ENCODE measurements at regions of chr9 and their contacts with region 1.

Region 1: GRCh38 chr9:14018081-14018480 is 295.9 kb downstream of the NFIB start:
- DNase-seq: no peak

Region 2: GRCh38 chr9:13975611-13976290 is 42.3 kb before region 1 on chr9:
- intact Hi-C with region 1: loop called (anchors 2 kb)
- DNase-seq: no peak

Region 3: DNA sequence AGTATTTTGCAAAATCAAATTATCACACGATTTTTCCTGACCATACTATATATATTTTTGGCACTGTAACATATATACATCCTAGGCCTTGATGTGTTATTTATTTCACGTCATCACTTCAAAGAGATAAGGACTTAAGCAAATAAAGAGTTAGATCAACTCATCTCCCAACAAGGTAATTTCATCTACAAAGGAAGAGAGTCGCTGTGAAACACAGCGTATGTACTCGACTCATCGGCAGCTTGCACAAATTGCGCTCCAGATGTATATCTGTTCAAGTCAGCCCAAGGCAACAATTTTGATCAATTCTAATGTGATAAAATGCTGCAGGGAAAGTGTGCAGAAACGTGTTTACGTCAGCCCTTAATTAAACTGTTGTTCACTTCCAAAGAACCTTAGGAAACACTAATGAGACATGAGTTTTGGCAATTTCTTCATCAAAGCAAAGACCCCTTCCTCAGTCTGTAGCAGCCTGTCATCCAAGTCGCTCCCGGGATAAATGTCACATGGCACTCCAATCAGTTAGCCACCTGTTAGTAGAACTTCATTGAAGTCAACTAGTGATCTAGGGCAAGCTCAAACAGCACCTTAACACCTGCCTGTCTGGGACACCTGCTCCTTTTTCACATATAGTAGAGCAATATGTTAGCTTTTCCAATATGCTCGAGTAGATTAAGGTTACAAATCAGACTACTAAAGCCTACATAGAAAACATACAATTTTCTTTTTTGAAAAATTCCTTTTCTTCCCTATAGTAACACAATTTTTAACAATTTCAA is 113.4 kb after region 1 on chr9:
- intact Hi-C with region 1: no loop called
- DNase-seq: no peak

Region 4: DNA sequence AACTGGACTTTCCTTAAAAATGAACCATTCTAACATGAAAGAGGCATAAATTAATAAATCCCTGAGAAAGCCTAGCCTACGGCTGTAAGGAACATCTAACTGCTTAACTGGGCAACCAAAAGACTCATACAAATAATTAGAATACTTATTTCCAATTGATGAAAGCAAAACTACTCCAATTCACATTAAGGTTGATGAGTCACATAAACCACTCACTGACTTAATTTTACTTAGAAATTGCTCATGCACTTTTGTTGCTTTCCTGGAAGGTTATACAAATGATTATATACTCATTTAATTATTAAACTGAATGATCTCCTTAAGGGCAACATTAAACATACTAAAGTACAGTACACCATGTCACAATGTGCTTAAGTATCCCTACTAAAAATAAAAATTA is 194.0 kb after region 1 on chr9:
- intact Hi-C with region 1: no loop called
- DNase-seq: no peak

Region 5: DNA sequence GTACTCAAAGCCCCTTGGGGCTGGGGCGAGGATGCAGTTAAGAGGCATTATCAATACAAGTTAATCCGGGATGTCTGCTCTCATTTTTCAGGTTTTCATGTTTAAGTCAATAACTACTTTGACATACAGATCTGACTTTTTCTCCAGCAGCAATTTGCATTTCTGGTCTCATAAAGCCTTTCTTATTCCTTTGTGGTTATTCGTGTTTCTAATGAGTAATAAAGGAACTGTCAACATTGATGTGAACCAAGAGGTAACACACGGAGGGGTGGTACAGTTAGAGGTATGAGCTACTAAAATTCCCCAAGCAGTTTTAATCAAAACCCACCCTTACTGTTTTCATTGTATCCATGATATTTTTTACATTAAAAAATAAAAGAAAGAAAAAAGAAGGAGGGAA is 433.9 kb after region 1 on chr9:
- intact Hi-C with region 1: no loop called
- DNase-seq: no peak

Measured in head of caudate nucleus (tissue), 42 donors.